ENCODE measurements at regions of chr5 and their contacts with region 1.

Region 1: GRCh38 chr5:6583049-6583880 is 49.6 kb downstream of the NSUN2 start:
- DNase-seq: peak; percentile 27
- ATAC-seq: peak; percentile 85
- H3K4me3 Mint-ChIP-seq: no peak overlapping the region
- H3K27ac Mint-ChIP-seq: no peak overlapping the region
- H3K4me1 Mint-ChIP-seq: peaks cover 2% of the 10 kb centered on the region
- H3K27me3 Mint-ChIP-seq: peaks cover 41% of the 10 kb centered on the region
- CTCF ChIP-seq: no peak

Region 2: DNA sequence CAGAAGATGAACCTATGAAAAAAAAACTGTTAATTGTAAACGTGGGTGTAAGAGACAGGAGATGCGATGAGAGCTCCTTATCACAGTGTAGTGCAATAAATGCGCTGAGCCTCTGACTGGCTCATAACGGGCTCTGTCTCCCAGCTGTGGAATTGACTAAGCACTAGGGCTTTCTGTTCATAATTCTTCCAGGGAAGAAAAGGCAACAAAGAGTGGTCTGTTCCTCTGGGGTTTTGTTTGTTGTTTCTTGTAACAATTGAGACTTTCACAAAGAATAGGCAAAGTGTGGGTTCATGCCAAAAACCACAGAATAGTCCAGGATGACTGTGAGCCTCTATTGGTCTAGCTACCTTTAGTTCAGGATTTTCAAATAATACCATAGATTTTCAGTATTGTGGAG is 95.2 kb before region 1 on chr5:
- CTCF ChIA-PET with region 1: no interaction called
- POLR2A ChIA-PET with region 1: no interaction called
- intact Hi-C with region 1: loop called (anchors 5 kb)
- DNase-seq: no peak
- ATAC-seq: no peak
- H3K4me3 Mint-ChIP-seq: no peak overlapping the region
- H3K27ac Mint-ChIP-seq: no peak overlapping the region
- H3K4me1 Mint-ChIP-seq: peaks cover 51% of the 10 kb centered on the region
- H3K27me3 Mint-ChIP-seq: no peaks in the 10 kb centered on the region
- CTCF ChIP-seq: no peak

Region 3: DNA sequence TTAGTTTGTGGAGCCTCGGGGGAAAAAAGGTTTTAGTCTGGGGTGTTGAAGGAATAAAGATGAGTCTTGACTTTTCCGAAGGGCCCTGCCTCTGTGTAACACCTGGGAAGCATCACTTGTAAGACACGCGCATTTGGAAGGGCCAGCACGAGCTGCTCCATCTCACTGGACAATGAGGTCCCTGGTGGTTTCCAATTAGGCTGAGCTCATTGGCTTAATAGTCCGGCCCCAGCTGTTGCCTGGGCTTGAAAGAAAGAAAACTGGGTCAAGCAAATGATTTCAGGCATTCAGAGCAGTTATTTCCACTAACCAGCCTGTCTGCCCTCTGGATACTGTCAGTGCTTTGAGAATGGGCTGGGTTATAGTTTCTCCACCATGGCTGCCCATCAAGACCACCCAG is 14.9 kb before region 1 on chr5:
- CTCF ChIA-PET with region 1: no interaction called
- POLR2A ChIA-PET with region 1: no interaction called
- intact Hi-C with region 1: no loop called
- DNase-seq: no peak
- ATAC-seq: no peak
- H3K4me3 Mint-ChIP-seq: no peak overlapping the region
- H3K27ac Mint-ChIP-seq: no peak overlapping the region
- H3K4me1 Mint-ChIP-seq: no peaks in the 10 kb centered on the region
- H3K27me3 Mint-ChIP-seq: peaks cover 18% of the 10 kb centered on the region
- CTCF ChIP-seq: no peak

Region 4: DNA sequence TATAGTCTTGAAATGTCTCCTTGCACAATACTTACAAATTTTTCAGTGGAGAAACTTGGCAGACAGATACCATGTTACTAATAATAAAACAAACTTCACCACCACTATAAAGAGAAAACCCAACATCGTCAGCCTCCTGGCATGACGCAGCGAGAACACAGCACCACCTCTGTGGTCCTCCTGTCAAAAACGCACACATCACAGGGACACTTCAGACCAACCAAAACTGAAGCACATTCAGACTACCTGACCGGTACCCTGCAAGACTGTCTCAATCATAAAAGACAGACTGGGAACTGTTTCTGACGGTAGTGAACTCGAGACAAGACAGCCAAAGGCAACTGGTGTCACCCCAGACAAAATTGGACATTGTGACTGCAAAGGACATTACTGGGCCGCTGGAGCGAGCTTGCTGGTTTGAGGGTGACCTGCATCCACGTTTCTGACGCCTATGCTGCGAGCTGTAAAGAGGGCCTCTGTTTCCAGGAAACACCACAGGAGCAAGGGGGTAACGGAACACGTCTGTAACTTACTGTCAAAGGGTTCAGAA is 15.2 kb after region 1 on chr5:
- CTCF ChIA-PET with region 1: no interaction called
- POLR2A ChIA-PET with region 1: no interaction called
- intact Hi-C with region 1: no loop called
- DNase-seq: no peak
- ATAC-seq: no peak
- H3K4me3 Mint-ChIP-seq: no peak overlapping the region
- H3K27ac Mint-ChIP-seq: no peak overlapping the region
- H3K4me1 Mint-ChIP-seq: no peaks in the 10 kb centered on the region
- H3K27me3 Mint-ChIP-seq: no peaks in the 10 kb centered on the region
- CTCF ChIP-seq: no peak

Measured in activated B cell treated with CpG ODN at 0.5 μM for 24 hours (primary cell).